Sciatic nerve (tissue), 2 donors: ENCODE measurements at regions of chr9 and their contacts with region 1.

Region 1: DNA sequence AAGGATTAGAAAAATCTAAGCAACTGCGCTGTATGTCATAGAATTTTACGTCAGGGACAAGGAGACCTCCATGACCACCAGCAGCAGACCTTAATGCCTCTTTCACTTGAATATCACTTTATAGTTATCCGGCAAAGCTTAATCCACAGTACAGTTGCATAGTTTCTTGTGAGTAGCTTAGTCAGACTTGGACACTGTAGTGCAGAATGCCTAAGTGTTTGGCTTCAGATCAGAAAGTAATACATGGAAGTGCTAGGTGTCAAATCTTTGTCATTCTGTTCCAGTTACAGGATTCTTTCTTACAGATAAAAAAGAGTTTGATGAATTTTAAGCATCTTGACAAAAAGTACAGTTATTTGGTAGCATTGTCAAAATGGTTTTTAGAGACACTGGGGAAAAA is 239.9 kb upstream of the PAPPA start:
- DNase-seq: no peak
- ATAC-seq: no peak

Region 2: DNA sequence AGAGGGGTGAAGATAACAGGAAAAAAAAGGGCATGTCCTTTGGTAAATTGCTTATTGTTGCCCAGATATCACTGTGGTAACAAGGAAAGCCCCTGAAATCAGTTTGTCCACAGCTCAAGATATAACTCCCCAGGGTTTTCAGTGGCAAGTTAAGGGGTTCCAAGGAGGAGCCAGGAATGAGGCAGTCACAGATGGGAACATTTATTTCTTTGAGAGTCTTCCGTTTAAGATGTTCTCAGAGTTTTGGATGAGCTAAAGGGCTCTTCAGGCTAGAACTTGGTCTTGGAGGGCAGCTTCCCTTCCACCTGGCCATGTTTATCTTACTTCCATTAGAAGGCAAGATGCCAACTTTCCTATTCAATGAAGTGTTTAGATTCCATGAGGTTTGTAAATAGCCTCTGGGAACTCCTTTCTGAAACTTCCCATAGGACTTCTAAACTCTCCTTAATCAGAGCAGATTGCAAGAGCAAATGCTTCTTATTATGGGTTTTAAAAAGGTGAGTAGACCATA is 518.1 kb before region 1 on chr9:
- intact Hi-C with region 1: loop called (anchors 5 kb)
- DNase-seq: no peak
- ATAC-seq: peak; percentile 72